Lower leg skin (tissue), 4 donors: ENCODE measurements at regions of chr2 and their contacts with region 1.

Region 1: GRCh38 chr2:73163483-73164367 is 38.6 kb upstream of the NOTO start:
- DNase-seq: peak; percentile 52 to 93
- H3K4me3 ChIP-seq: no peak overlapping the region
- CTCF ChIP-seq: no peak
- POLR2A ChIP-seq: no peak

Region 2: GRCh38 chr2:72993147-72993932 is 170.4 kb before region 1 on chr2:
- intact Hi-C with region 1: loop called (anchors 5 kb)
- DNase-seq: peak; percentile 36 to 81
- H3K4me3 ChIP-seq: no peak overlapping the region
- CTCF ChIP-seq: peak in 1 of 3 donors; percentile 54
- POLR2A ChIP-seq: no peak

Region 3: GRCh38 chr2:73085691-73086360 is 77.9 kb before region 1 on chr2:
- intact Hi-C with region 1: loop called (anchors 10 kb)
- DNase-seq: peak; percentile 81 to 96
- H3K4me3 ChIP-seq: no peak overlapping the region
- CTCF ChIP-seq: peak in 1 of 3 donors; percentile 71
- POLR2A ChIP-seq: no peak

Region 4: DNA sequence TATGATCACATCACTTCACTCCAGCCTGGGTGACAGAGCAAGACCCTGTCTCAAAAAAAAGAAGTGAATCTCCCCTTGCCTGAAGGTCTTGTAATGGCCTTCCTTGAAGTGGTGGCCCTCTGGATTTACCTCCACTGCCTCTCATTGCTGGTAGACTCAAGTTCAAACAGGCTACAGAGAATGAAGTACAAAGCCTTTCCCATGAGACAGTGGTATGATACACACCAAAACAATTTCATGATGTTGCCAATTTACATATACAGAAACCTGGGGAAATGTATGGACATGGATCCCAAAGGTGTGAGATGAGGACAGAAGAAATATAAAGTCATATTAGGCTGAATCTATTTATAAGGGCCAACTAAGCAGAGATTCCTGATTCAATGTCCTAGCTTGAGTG is 33.9 kb after region 1 on chr2:
- intact Hi-C with region 1: no loop called
- DNase-seq: no peak
- H3K4me3 ChIP-seq: no peak overlapping the region
- CTCF ChIP-seq: no peak
- POLR2A ChIP-seq: no peak